Aorta (tissue), 5 donors: ENCODE measurements at regions of chr20 and their contacts with region 1.

Region 1: DNA sequence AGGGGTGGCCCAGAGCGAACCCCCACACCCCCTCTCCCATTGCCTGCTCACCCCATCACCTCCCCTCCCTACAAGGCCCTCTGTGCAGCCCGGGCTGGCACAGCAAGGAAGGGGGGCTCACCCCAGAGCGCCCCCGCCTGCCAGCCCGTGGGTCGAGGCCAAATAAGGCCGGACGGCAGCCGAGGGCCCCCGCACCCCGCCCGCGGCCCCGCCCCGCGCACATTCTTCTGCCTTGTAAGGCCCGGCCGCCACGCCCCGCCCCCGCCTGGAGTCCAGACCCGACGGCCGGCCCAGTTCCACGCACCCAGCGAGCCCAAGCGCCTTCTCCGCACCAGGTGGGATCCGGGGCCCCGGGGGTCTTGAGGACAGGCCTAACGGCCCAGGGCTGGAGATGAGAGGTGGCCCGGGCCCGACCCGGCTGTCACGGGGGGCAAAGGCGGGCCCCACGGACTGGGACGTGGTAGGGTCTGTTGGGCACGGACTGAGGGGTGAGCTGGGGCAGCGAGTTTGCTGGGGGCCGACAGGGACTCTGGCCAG is at the start of gene MYL9:
- DNase-seq: peak; percentile 96 to 98
- ATAC-seq: peak; percentile 90
- H3K4me3 ChIP-seq: peak within 1 kb of the TSS; percentile 87 to 94
- H3K27ac ChIP-seq: peak within 1 kb of the TSS; percentile 95 to 98
- H3K4me1 ChIP-seq: peaks cover 0 to 4% of the 10 kb centered on the region in 2 donors
- H3K27me3 ChIP-seq: no peaks in the 10 kb centered on the region
- total RNA-seq, gene MYL9: 2,086 to 3,222 TPM

Region 2: DNA sequence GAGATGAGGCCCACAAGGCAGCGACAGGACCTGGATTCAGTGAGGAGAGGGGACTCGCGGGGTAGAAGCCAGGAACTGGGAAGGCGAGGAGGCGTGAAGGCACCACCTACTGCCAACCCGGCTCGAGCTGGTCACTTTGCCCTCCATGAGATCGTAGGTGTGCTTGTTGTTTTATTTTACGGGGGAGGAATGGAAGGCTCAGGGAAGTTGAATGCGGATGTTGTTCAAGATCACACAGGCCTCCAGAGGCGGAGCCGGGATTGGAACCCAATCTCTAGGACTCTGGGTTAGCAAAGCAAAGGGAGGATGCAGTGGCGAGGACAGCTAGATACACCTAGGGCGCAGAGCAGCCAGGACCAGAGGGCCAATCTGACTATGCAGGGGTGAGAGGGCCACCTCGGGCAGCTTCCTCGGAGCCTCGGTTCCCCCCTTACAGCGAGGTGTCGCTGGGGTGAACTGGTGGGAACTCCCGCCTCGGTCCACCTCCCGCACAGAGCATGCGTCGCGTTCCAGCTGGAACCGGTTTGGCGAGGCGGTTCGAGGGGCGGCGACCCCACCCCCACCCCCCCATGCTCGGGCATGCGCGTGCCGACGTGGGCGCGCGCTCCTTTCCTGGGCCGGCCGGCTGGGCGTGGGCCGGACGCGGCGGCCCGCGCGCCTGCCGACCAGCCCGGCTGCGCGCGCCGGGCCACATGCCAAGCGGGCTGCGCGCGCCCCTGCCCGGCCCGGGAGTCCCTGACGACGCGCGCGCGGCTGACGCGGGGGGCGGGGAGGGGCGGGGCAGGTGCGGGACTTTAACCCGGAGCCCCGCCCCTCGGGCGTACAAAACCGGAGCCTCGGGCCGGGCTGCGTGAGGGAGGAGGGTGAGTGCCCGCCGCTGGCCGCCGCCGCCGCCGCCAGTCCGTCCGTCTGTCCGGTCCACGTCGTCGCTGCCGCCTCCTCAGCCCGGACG is 80.4 kb before region 1 on chr20:
- intact Hi-C with region 1: loop called (anchors 2 kb)
- DNase-seq: peak; percentile 95 to 98
- ATAC-seq: peak; percentile 86
- H3K4me3 ChIP-seq: peak overlapping the region; percentile 84 to 97
- H3K27ac ChIP-seq: peak overlapping the region; percentile 90 to 93
- H3K4me1 ChIP-seq: peaks cover 0 to 5% of the 10 kb centered on the region in 2 donors
- H3K27me3 ChIP-seq: no peaks in the 10 kb centered on the region

Region 3: DNA sequence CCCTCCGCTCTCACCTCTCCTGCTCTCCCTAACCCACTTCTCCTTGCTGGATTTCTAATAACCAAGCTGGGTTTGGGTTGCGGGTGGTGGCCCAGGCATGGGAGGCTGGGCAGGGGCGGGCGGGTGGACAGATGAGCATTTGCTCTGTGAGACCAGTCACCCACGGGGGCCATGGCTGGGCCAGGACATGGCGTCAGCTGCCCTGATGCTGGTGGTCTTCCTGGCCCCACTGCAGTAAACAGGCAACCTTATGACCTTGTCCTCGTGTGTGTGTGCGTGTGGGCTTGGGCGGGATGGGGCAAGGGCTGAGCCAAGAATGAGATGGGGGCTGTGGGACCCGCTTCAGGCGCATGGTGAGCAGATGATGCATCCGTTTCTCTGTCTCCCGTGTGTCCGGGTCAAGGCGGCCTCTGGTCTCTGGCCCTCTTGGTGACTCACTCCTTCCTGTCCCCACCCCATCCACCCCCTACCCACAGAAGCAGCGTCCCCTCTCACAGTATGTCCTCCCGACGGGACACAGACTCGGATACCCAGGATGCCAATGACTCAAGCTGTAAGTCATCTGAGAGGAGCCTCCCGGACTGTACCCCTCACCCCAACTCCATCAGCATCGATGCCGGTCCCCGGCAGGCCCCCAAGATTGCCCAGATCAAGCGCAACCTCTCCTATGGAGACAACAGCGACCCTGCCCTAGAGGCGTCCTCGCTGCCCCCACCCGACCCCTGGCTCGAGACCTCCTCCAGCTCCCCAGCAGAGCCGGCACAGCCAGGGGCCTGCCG is 41.4 kb before region 1 on chr20:
- intact Hi-C with region 1: loop called in 1 of 2 experiments (anchors 5 kb)
- DNase-seq: no peak
- ATAC-seq: no peak
- H3K4me3 ChIP-seq: no peak overlapping the region
- H3K27ac ChIP-seq: no peak overlapping the region
- H3K4me1 ChIP-seq: peaks cover 0 to 4% of the 10 kb centered on the region in 2 donors
- H3K27me3 ChIP-seq: no peaks in the 10 kb centered on the region

Region 4: GRCh38 chr20:37007898-37008649 is 466.8 kb after region 1 on chr20:
- intact Hi-C with region 1: no loop called
- DNase-seq: no peak
- ATAC-seq: no peak
- H3K4me3 ChIP-seq: no peak overlapping the region
- H3K27ac ChIP-seq: no peak overlapping the region
- H3K4me1 ChIP-seq: no peaks in the 10 kb centered on the region
- H3K27me3 ChIP-seq: no peaks in the 10 kb centered on the region